ENCODE measurements at regions of chr19 and their contacts with region 1.

Region 1: GRCh38 chr19:40560092-40560507 is 16.6 kb upstream of the SHKBP1 start:
- DNase-seq: no peak
- H3K4me3 ChIP-seq: no peak overlapping the region
- H3K27ac ChIP-seq: no peak overlapping the region
- H3K4me1 ChIP-seq: no peaks in the 10 kb centered on the region
- H3K27me3 ChIP-seq: peaks cover 36% of the 10 kb centered on the region
- CTCF ChIP-seq: no peak

Region 2: GRCh38 chr19:40365613-40366401 is 194.3 kb before region 1 on chr19:
- CTCF ChIA-PET with region 1: no interaction called
- POLR2A ChIA-PET with region 1: no interaction called
- intact Hi-C with region 1: no loop called
- DNase-seq: peak in 1 of 2 experiments; percentile 51
- H3K4me3 ChIP-seq: peak overlapping the region; percentile 60
- H3K27ac ChIP-seq: no peak overlapping the region
- H3K4me1 ChIP-seq: 0 out of 2 replicates have a peak, but pooled peaks cover 4% of the 10 kb centered on the region
- H3K27me3 ChIP-seq: no peaks in the 10 kb centered on the region
- CTCF ChIP-seq: no peak

Region 3: DNA sequence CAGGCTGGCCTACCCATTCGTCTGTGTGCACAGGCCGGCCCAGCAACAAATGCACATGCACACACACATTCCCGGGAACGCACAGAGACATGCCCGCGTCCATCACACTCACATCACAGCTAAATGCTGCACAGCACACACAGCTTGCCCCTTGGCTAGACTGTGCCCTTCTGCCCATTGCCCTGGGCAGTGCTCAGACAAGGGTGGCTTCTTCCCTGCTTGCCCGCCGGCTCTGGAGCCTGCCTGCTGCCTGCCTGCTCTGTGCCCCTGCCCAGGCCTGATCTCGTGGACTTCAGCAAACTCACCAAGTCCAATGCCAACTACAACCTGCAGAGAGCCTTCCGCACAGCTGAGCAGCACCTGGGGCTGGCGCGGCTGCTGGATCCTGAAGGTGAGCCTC is 62.9 kb before region 1 on chr19:
- CTCF ChIA-PET with region 1: no interaction called
- POLR2A ChIA-PET with region 1: no interaction called
- intact Hi-C with region 1: no loop called
- DNase-seq: no peak
- H3K4me3 ChIP-seq: no peak overlapping the region
- H3K27ac ChIP-seq: no peak overlapping the region
- H3K4me1 ChIP-seq: no peaks in the 10 kb centered on the region
- H3K27me3 ChIP-seq: peaks cover 13% of the 10 kb centered on the region
- CTCF ChIP-seq: no peak

Region 4: DNA sequence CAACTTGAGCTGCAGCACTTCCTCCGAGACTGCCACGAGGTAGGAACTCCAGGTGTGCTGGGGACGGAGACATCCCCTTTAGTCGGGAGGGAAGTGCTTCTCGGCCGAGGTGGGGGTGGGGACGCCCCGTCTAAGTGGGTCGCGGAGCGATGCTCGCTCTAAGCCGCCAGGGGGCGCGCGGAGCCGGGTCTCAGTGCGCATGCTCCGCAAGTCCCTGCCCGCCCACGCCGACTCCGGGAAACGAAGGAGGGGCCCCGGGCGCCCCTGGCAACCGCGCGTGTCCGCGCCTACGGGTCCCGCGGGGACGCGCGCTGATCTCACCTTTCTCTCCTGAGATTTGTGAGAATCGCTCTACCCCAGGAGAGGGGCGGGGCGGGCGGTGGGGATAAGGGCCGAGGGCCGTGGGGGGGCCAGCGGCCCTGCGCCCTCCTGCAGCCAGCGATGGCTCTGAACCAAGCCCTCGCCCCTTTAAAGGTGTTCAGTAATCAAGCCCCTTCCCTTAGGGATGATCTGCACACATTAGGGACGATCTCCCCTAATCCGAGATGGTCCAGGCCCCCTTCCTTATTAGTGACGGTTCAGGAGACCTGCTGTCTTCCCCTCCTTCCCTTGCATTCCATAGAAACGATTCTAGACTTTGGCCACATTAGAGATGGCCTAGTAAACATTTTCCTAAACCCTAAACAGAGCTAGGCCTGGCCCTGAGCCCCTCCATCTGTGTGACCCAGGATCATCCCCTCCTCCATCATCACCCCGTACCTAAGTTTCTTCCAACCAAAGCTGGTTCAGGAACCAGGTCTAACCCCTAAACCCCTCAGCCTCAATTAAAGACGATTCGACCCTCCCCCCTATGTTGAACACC is 30.8 kb before region 1 on chr19:
- CTCF ChIA-PET with region 1: no interaction called
- POLR2A ChIA-PET with region 1: no interaction called
- intact Hi-C with region 1: no loop called
- DNase-seq: peak; percentile 65 to 87
- H3K4me3 ChIP-seq: peak overlapping the region; percentile 54
- H3K27ac ChIP-seq: no peak overlapping the region
- H3K4me1 ChIP-seq: no peaks in the 10 kb centered on the region
- H3K27me3 ChIP-seq: no peaks in the 10 kb centered on the region; the same call in 1 of the 2 replicates
- CTCF ChIP-seq: peak; percentile 96

Region 5: DNA sequence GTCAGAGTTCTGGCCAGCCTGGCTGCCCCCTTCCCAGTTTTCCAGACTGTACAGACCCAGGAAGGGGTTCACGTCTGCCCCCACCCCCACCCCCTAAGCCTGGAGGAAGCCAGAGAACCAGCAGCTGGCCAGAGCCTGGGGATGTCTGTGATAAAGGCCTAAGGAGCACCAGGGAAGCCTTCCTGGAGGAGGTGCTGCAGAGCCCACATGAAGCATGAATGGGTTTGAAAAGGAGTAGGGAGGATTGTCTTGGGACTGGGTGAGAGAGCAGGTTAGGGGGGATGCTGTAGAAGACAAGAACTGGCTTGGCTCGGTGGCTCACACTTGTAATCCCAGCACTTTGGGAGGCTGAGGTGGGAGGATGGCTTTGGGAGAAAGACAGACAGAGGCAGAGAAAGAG is 22.4 kb after region 1 on chr19:
- CTCF ChIA-PET with region 1: interaction called, 11 read pairs
- POLR2A ChIA-PET with region 1: no interaction called
- intact Hi-C with region 1: no loop called
- DNase-seq: no peak
- H3K4me3 ChIP-seq: no peak overlapping the region
- H3K27ac ChIP-seq: no peak overlapping the region
- H3K4me1 ChIP-seq: peaks cover 19% of the 10 kb centered on the region; the same call in 1 of the 2 replicates
- H3K27me3 ChIP-seq: no peaks in the 10 kb centered on the region
- CTCF ChIP-seq: no peak